H1 (cell line): ENCODE measurements at regions of chr1 and their contacts with region 1.

Region 1: GRCh38 chr1:29259802-29260441 is 23.6 kb downstream of the PTPRU start:
- DNase-seq: peak in 1 of 2 experiments; percentile 89
- H3K4me3 ChIP-seq: peak overlapping the region; percentile 52 to 69 (median 58)
- H3K27ac ChIP-seq: no peak overlapping the region
- H3K4me1 ChIP-seq: peaks cover 8 to 23% (median 16%) of the 10 kb centered on the region in 4 experiments
- H3K27me3 ChIP-seq: peaks cover 7 to 33% (median 27%) of the 10 kb centered on the region in 4 experiments
- CTCF ChIP-seq: no peak
- EP300 ChIP-seq: no peak
- POLR2A ChIP-seq: no peak
- RAD21 ChIP-seq: no peak

Region 2: GRCh38 chr1:29171089-29171488 is 88.8 kb before region 1 on chr1:
- CTCF ChIA-PET with region 1: no interaction called
- POLR2A ChIA-PET with region 1: no interaction called
- DNase-seq: no peak
- H3K4me3 ChIP-seq: no peak overlapping the region
- H3K27ac ChIP-seq: no peak overlapping the region
- H3K4me1 ChIP-seq: peaks cover 3 to 8% (median 6%) of the 10 kb centered on the region in 4 experiments; a peak in 4 of 7 replicates
- H3K27me3 ChIP-seq: no peaks in the 10 kb centered on the region
- CTCF ChIP-seq: no peak
- EP300 ChIP-seq: no peak
- POLR2A ChIP-seq: no peak
- RAD21 ChIP-seq: no peak

Region 3: DNA sequence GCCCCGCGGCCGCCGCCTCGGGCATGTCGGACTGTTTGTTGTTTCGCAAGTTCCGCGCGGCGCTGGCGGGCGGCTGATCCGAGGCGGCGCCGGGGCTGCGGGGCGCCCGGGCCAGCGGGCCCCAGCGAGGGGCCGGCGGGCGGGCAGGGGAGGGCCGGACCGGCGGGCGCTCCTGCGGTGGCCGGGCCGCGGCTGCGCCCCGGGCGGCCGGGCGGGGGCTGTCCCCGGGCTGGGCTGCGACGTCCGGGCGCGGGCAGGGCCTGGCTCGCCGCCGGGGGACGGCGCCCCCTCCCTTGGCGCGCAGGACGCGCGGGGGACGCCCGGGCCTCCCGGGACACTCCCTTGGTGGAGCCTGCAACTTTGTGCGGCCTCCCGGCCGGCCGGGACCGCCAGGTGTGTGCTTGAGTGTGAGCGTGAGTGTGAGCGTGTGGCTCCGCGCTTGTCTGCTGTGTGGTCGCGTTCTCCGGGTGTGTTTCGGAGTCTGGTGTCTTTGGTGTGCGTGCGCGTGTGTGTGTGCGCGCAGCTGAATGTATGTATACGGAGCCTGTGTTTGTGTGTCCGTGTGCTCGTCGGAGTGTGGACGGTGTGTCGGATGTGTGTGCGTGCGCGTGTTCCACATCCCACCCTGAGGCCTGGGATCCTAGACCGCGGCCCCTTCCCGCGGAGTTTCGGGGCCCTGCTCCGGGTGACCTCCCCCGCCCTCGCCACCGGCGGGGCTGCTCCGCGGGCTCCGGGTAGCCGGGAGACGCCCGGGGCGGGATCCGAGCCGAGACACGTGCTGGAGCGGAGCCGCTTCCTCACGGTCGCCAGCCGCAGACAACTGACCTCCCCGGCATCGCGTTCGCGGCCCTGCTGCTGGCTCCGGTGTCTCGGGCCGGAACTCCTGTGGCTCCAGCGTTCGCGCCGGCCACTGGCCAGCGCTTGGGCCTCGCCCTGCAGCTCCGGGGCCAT is 22.0 kb before region 1 on chr1:
- CTCF ChIA-PET with region 1: interaction called, 9 read pairs
- POLR2A ChIA-PET with region 1: interaction called, 11 read pairs
- DNase-seq: peak in 1 of 2 experiments; percentile 72
- H3K4me3 ChIP-seq: peak overlapping the region; percentile 58 to 68 (median 60)
- H3K27ac ChIP-seq: no peak overlapping the region
- H3K4me1 ChIP-seq: peaks cover 10 to 33% (median 24%) of the 10 kb centered on the region in 4 experiments
- H3K27me3 ChIP-seq: peaks cover 13 to 34% (median 29%) of the 10 kb centered on the region in 4 experiments
- CTCF ChIP-seq: no peak
- EP300 ChIP-seq: no peak
- POLR2A ChIP-seq: no peak
- RAD21 ChIP-seq: no peak

Region 4: DNA sequence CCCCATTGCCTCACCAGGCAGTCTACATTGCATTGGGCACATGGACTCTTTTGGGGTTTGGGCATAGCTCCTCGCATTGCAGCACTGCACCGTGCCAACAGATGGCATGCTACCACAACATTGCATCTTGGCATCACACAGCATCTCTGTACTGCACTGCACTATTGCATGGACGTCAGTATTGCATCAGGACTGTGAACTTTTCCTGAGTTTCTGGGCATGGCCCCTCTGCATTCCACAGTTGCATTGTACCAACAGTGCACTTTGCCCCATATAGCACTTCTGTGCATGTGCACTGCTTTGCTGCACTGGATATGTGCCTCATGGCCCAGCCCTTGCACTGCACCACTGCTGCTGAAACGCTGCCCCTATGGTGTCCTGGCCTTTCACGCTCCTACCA is 14.0 kb before region 1 on chr1:
- CTCF ChIA-PET with region 1: interaction called, 19 read pairs
- POLR2A ChIA-PET with region 1: interaction called, 11 read pairs
- DNase-seq: no peak
- H3K4me3 ChIP-seq: no peak overlapping the region
- H3K27ac ChIP-seq: no peak overlapping the region
- H3K4me1 ChIP-seq: peaks cover 13 to 26% (median 20%) of the 10 kb centered on the region in 4 experiments
- H3K27me3 ChIP-seq: no peaks in the 10 kb centered on the region
- CTCF ChIP-seq: peak in 2 of 3 experiments; percentile 62 to 78; a peak in 3 of 4 replicates
- EP300 ChIP-seq: no peak
- POLR2A ChIP-seq: no peak
- RAD21 ChIP-seq: peak; percentile 79 to 82

Region 5: DNA sequence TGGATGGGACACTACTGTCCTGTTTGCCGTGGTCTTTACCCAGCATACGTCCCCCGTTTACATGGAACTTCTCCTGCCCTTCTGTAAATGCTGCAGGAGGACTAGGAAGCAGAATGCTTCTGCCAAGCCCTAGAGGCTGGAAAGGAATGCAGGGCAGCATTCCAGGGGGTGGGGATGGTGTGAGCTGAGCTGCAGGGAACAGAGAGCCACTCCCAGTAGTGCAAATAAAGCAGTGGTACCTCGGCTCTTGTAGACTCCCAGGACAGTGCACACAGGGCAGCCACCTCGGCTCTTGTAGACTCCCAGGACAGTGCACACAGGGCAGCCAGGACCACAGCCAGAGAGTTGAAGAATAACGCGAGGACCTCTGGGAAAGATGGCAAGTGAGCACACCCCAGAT is 11.8 kb after region 1 on chr1:
- CTCF ChIA-PET with region 1: interaction called, 11 read pairs
- POLR2A ChIA-PET with region 1: interaction called, 6 read pairs
- DNase-seq: peak; percentile 73
- H3K4me3 ChIP-seq: peak overlapping the region in 2 of 4 experiments; percentile 3 to 11; a peak in 2 of 8 replicates
- H3K27ac ChIP-seq: 0 out of 2 replicates have a peak overlapping the region, but pooled peaks have one; percentile 4
- H3K4me1 ChIP-seq: peaks cover 6 to 15% (median 11%) of the 10 kb centered on the region in 4 experiments
- H3K27me3 ChIP-seq: no peaks in the 10 kb centered on the region
- CTCF ChIP-seq: no peak
- EP300 ChIP-seq: 0 out of 3 replicates have a peak, but pooled peaks of 1 of the 2 experiments have one; percentile 12
- POLR2A ChIP-seq: no peak
- RAD21 ChIP-seq: peak in 1 of 2 experiments; percentile 22; a peak in 2 of 4 replicates